HCT116 (cell line): ENCODE measurements at regions of chr12 and their contacts with region 1.

Region 1: GRCh38 chr12:43444940-43445564 is 107.0 kb downstream of the ADAMTS20 start:
- DNase-seq: peak; percentile 73
- ATAC-seq: peak; percentile 69
- H3K4me3 ChIP-seq: no peak overlapping the region
- H3K27ac ChIP-seq: no peak overlapping the region
- H3K4me1 ChIP-seq: no peaks in the 10 kb centered on the region
- H3K27me3 ChIP-seq: no peaks in the 10 kb centered on the region
- CTCF ChIP-seq: peak; percentile 45 to 81 (median 69); a peak in 5 of 6 replicates
- POLR2A ChIP-seq: no peak
- RAD21 ChIP-seq: peak; percentile 46

Region 2: DNA sequence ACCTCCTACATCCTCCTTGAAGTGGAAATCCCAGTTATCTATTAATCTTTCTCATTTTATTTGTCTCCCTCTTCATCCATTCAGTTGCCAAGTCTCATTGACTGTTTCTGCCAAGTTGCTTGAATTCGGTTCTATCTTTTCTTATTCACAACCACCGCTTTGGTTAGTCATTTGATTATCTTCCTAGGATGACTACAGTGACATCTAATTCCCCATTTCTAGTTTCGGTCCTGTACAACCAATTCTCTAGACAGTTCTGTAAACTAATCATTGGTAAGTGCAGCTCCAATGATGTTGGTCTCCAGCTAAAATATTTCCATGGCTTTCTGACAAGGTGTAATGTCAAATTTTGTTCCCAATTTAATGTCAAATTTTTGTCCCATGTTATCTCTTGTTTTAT is 113.1 kb before region 1 on chr12:
- CTCF ChIA-PET with region 1: no interaction called
- POLR2A ChIA-PET with region 1: no interaction called
- RAD21 ChIA-PET with region 1: no interaction called
- intact Hi-C with region 1: no loop called
- DNase-seq: no peak
- ATAC-seq: no peak
- H3K4me3 ChIP-seq: no peak overlapping the region
- H3K27ac ChIP-seq: no peak overlapping the region
- H3K4me1 ChIP-seq: no peaks in the 10 kb centered on the region
- H3K27me3 ChIP-seq: no peaks in the 10 kb centered on the region
- CTCF ChIP-seq: no peak
- POLR2A ChIP-seq: no peak
- RAD21 ChIP-seq: no peak

Region 3: DNA sequence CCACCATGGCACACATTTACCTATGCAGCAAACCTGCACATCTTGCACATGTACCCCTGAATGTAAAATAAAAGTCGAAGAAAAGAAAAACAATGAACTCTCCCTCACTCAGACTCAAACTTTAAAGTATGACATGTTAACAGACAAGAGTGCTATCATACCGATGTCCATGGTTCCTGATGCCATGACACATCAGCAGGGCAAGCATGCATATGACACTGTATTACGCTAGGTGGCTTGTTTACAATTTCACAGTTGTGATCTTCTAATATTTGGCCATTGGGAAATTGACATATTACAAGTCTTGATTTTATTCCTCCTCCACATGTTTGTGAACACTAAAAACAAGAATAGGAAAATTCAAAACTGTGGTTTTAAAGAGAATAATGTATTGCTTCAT is 19.7 kb before region 1 on chr12:
- CTCF ChIA-PET with region 1: interaction called, 12 read pairs
- POLR2A ChIA-PET with region 1: interaction called, 3 read pairs
- RAD21 ChIA-PET with region 1: no interaction called
- intact Hi-C with region 1: no loop called
- DNase-seq: no peak
- ATAC-seq: no peak
- H3K4me3 ChIP-seq: no peak overlapping the region
- H3K27ac ChIP-seq: no peak overlapping the region
- H3K4me1 ChIP-seq: no peaks in the 10 kb centered on the region
- H3K27me3 ChIP-seq: no peaks in the 10 kb centered on the region
- CTCF ChIP-seq: no peak
- POLR2A ChIP-seq: no peak
- RAD21 ChIP-seq: no peak

Region 4: DNA sequence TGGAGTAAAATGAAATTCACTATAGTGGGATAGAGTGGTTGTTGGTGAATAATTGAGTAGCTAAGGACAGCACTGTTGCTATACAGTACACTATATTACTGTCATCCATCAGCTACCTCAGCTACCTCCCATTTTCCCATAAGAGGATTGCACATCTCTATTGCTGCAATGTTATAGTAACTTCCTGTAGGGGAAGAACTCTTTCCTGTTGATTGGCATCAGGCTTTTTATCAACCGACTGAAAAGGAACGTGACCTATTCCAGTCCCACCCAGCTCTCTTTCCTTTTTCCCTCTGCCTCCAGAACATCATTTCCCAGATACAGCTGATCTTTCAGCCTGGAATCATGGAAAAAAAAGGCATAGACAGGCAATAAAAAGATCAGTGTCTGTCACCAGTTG is 10.4 kb before region 1 on chr12:
- CTCF ChIA-PET with region 1: interaction called, 12 read pairs
- POLR2A ChIA-PET with region 1: interaction called, 3 read pairs
- RAD21 ChIA-PET with region 1: no interaction called
- intact Hi-C with region 1: no loop called
- DNase-seq: no peak
- ATAC-seq: no peak
- H3K4me3 ChIP-seq: no peak overlapping the region
- H3K27ac ChIP-seq: no peak overlapping the region
- H3K4me1 ChIP-seq: no peaks in the 10 kb centered on the region
- H3K27me3 ChIP-seq: no peaks in the 10 kb centered on the region
- CTCF ChIP-seq: no peak
- POLR2A ChIP-seq: no peak
- RAD21 ChIP-seq: no peak